Activated CD8-positive, alpha-beta T cell treated with anti-CD3 and anti-CD28 coated beads, Interleukin-2, amount 10 ng/mL, durations not matched to agents 7 days and 5 days (primary cell): ENCODE measurements at regions of chr3 and their contacts with region 1.

Region 1: GRCh38 chr3:17742108-17742879 is at the start of gene TBC1D5:
- DNase-seq: peak; percentile 96
- ATAC-seq: peak; percentile 97
- H3K4me3 Mint-ChIP-seq: peak within 1 kb of the TSS; percentile 93
- H3K27ac Mint-ChIP-seq: peak within 1 kb of the TSS; percentile 96
- H3K4me1 Mint-ChIP-seq: peaks cover 54% of the 10 kb centered on the region
- H3K27me3 Mint-ChIP-seq: no peaks in the 10 kb centered on the region
- total RNA-seq, gene TBC1D5: 51.2 to 52.8 TPM

Region 2: GRCh38 chr3:17755836-17756235 is 13.5 kb after region 1 on chr3:
- CTCF ChIA-PET with region 1: no interaction called
- POLR2A ChIA-PET with region 1: no interaction called
- DNase-seq: peak; percentile 39
- ATAC-seq: peak; percentile 49
- H3K4me3 Mint-ChIP-seq: no peak overlapping the region
- H3K27ac Mint-ChIP-seq: no peak overlapping the region
- H3K4me1 Mint-ChIP-seq: peaks cover 17% of the 10 kb centered on the region
- H3K27me3 Mint-ChIP-seq: peaks cover 7% of the 10 kb centered on the region

Region 3: DNA sequence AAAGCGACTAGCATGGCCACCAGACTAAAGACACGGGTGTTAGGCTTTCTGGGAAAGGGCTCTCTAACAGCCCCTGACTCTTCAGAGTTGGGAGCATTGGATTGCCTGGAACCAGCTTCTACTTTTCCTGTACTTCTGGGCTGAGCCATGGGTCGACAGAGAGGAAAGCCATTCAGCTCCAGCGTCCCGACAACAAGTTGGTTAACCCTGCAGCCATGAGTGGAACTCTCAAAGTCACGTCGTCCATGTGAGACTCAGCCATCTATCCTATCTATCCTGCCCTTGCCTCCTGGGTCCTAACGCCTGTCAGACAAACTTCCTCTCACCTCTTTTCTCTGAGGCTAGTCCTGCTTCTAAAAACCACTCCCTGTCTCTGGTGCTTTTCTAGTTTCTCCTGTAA is 32.8 kb after region 1 on chr3:
- CTCF ChIA-PET with region 1: interaction called, 4 read pairs
- POLR2A ChIA-PET with region 1: interaction called, 17 read pairs
- DNase-seq: peak; percentile 74
- ATAC-seq: peak; percentile 48
- H3K4me3 Mint-ChIP-seq: peak overlapping the region; percentile 75
- H3K27ac Mint-ChIP-seq: peak overlapping the region; percentile 81
- H3K4me1 Mint-ChIP-seq: peaks cover 50% of the 10 kb centered on the region
- H3K27me3 Mint-ChIP-seq: peaks cover 14% of the 10 kb centered on the region